PC-3 (cell line): ENCODE measurements at regions of chr2 and their contacts with region 1.

Region 1: DNA sequence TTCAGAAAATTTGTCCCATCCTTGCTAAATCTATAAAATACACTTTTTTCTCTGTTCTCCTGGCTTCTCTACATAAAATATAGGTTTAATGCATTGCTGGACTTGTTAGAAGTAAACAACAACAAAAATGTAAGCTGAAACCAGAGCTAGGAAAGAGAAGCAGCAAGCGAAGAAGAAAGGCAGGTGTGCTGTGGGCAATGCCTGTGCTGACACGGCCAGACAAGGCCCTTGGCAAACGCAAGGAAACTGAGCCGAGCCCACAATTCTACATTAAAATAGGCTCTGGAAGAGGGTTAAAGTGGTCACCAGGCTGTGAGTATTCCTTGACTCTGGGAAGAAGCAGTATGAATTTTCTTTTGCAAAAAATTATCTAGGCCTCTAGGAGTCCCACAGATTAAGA is 70.0 kb downstream of the ICA1L start:
- DNase-seq: no peak
- ATAC-seq: no peak
- H3K4me3 ChIP-seq: no peak overlapping the region
- H3K27ac ChIP-seq: no peak overlapping the region
- H3K4me1 ChIP-seq: 0 out of 2 replicates have a peak, but pooled peaks cover under 1% of the 10 kb centered on the region
- H3K27me3 ChIP-seq: no peaks in the 10 kb centered on the region
- CTCF ChIP-seq: no peak

Region 2: DNA sequence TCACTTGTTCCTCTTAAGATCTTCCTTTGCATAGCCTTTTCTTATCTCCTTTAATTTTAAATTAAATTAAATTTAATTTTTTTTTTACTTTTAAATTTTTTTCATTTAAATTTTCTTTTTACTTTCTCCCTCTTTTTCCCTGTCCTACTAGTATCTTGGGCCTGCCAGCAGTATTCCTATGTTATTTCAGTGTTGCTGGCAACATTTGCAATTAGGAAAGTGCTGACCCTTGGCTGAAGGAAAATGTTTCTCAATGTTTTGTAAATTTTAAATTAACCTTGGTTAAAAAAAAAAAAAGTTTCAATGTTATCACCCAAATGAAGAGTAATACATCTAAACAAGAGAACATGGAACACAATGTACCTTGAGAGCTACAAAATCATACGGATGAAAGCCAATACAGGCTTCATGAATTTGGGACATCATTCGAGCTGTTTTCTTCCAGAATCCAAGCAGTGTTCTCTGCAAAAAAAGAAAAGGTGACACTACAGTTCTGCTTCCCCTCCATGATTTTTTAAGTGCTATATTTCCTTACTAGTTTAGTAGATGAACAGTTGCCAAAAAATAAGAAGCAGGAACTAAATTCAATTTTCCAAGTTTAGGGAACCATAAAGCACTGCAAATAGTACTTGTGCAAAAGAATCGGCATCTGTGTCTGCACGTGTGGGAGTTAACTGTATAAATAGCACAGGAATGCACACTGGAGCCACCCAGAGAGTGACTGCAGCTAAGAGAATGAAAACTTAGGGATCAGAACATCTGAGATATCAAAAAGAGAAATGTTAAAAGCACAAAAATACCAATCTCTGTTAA is 14.2 kb after region 1 on chr2:
- CTCF ChIA-PET with region 1: no interaction called
- POLR2A ChIA-PET with region 1: interaction called, 20 read pairs
- intact Hi-C with region 1: no loop called
- DNase-seq: no peak
- ATAC-seq: no peak
- H3K4me3 ChIP-seq: no peak overlapping the region
- H3K27ac ChIP-seq: no peak overlapping the region
- H3K4me1 ChIP-seq: 0 out of 2 replicates have a peak, but pooled peaks cover 3% of the 10 kb centered on the region
- H3K27me3 ChIP-seq: no peaks in the 10 kb centered on the region
- CTCF ChIP-seq: no peak

Region 3: DNA sequence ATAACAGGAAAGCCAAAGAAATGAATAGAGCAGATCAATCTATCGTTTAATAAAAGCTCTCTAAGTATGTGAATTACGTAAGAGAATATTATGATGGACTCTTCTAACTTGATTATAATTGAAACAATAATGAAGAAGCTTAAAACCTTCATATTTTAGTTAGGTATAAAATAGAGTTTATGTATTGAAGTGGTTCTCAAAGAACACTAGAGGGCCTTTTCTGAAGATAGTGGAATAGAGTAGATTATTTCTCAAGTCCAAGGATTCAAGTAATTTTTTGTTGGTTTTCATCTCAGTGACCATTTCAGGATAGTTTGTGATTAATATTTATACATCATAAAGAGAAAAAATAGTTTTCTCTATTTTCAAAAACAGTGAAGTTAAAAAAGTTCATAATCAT is 310.8 kb after region 1 on chr2:
- CTCF ChIA-PET with region 1: no interaction called
- POLR2A ChIA-PET with region 1: no interaction called
- intact Hi-C with region 1: no loop called
- DNase-seq: no peak
- ATAC-seq: no peak
- H3K4me3 ChIP-seq: no peak overlapping the region
- H3K27ac ChIP-seq: no peak overlapping the region
- H3K4me1 ChIP-seq: peaks cover 4% of the 10 kb centered on the region; the same call in 1 of the 2 replicates
- H3K27me3 ChIP-seq: no peaks in the 10 kb centered on the region
- CTCF ChIP-seq: peak; percentile 44; the same call in 1 of the 2 replicates